ENCODE measurements at regions of chr17 and their contacts with region 1.

Region 1: DNA sequence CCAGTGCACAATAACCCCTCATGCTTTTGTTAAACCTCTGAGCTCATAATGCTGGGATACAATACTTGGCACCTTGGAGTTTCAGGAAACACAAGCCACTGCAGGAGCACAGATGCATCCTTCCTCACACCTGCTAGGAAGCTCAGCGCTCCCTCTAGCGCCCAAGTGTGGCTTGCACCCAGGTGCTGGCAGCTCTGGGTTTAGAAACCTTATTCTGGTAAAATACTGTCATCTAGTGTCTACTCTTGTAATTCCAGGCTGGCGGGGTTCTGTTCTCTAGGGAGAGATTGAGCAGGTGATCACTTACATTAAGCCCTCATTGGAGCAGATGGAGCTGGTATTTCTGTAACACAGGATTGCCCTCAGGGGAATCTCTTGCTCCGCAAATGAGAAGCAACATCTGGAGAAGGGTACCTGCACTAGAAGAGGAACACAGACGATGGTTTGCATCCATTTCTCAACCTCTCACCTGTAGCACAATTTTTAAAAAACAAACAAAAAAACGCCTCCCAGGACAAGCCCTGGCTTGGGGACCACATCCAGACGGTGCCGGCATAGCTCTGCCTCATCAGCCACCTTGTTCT is 1.5 kb downstream of the CCL1 start:
- DNase-seq: peak; percentile 25
- H3K4me3 Mint-ChIP-seq: no peak overlapping the region
- H3K27ac Mint-ChIP-seq: no peak overlapping the region
- H3K4me1 Mint-ChIP-seq: no peaks in the 10 kb centered on the region
- H3K27me3 Mint-ChIP-seq: peaks cover 19% of the 10 kb centered on the region
- CTCF ChIP-seq: peak; percentile 98

Region 2: GRCh38 chr17:34171245-34171818 is 190.2 kb before region 1 on chr17:
- CTCF ChIA-PET with region 1: interaction called, 22 read pairs
- POLR2A ChIA-PET with region 1: no interaction called
- intact Hi-C with region 1: no loop called
- DNase-seq: peak; percentile 29
- H3K4me3 Mint-ChIP-seq: no peak overlapping the region
- H3K27ac Mint-ChIP-seq: no peak overlapping the region
- H3K4me1 Mint-ChIP-seq: no peaks in the 10 kb centered on the region
- H3K27me3 Mint-ChIP-seq: no peaks in the 10 kb centered on the region
- CTCF ChIP-seq: peak; percentile 81

Region 3: DNA sequence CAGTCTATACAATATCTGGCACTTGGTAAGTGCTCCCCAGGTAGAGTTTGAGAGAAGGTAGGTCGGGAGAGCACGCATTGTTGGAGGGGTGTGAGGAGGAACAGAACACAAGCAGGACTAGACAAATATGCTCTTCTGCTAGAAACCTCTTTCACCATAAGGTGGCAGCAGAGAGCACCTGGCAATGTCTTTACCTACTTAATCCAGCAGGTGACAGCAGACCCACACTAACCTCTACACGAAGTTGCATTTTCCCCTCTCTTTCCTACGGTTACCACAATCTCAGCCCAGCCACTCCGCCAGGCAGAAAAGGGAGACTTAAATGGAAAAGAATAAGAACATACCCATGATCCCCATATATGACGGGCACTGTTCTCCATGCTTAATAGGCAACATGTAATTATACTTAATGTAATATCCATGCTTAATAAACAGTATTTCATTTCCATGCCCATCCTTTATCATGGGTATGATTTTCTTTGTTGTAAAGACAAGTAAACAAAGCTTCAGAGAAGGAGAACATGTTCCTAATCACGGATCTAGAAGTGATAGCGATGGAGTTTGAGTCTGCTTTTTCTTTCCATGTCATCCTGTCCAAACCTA is 161.5 kb before region 1 on chr17:
- CTCF ChIA-PET with region 1: interaction called, 184 read pairs
- POLR2A ChIA-PET with region 1: interaction called, 4 read pairs
- intact Hi-C with region 1: loop called (anchors 1 kb)
- DNase-seq: peak; percentile 79
- H3K4me3 Mint-ChIP-seq: no peak overlapping the region
- H3K27ac Mint-ChIP-seq: no peak overlapping the region
- H3K4me1 Mint-ChIP-seq: no peaks in the 10 kb centered on the region
- H3K27me3 Mint-ChIP-seq: peaks cover 15% of the 10 kb centered on the region
- CTCF ChIP-seq: peak; percentile 100

Region 4: GRCh38 chr17:34254651-34255380 is 106.8 kb before region 1 on chr17 and contains the start of gene CCL2:
- CTCF ChIA-PET with region 1: interaction called, 12 read pairs
- POLR2A ChIA-PET with region 1: no interaction called
- intact Hi-C with region 1: no loop called
- DNase-seq: peak; percentile 10
- H3K4me3 Mint-ChIP-seq: peak within 1 kb of the TSS; percentile 64
- H3K27ac Mint-ChIP-seq: peak within 1 kb of the TSS; percentile 60
- H3K4me1 Mint-ChIP-seq: peaks cover 46% of the 10 kb centered on the region
- H3K27me3 Mint-ChIP-seq: no peaks in the 10 kb centered on the region
- CTCF ChIP-seq: no peak
- total RNA-seq, gene CCL2: 0.59 and 1.0 TPM in 2 replicates

Region 5: GRCh38 chr17:34306466-34306865 is 55.1 kb before region 1 on chr17:
- CTCF ChIA-PET with region 1: interaction called, 5 read pairs
- POLR2A ChIA-PET with region 1: no interaction called
- intact Hi-C with region 1: loop called (anchors 1 kb)
- DNase-seq: peak; percentile 3
- H3K4me3 Mint-ChIP-seq: no peak overlapping the region
- H3K27ac Mint-ChIP-seq: no peak overlapping the region
- H3K4me1 Mint-ChIP-seq: peaks cover 5% of the 10 kb centered on the region
- H3K27me3 Mint-ChIP-seq: no peaks in the 10 kb centered on the region
- CTCF ChIP-seq: peak; percentile 32

Region 6: GRCh38 chr17:34339138-34339770 is 22.3 kb before region 1 on chr17:
- CTCF ChIA-PET with region 1: interaction called, 11 read pairs
- POLR2A ChIA-PET with region 1: no interaction called
- intact Hi-C with region 1: no loop called
- DNase-seq: no peak
- H3K4me3 Mint-ChIP-seq: no peak overlapping the region
- H3K27ac Mint-ChIP-seq: no peak overlapping the region
- H3K4me1 Mint-ChIP-seq: no peaks in the 10 kb centered on the region
- H3K27me3 Mint-ChIP-seq: peaks cover 19% of the 10 kb centered on the region
- CTCF ChIP-seq: no peak

Region 7: GRCh38 chr17:34347063-34347462 is 14.5 kb before region 1 on chr17:
- CTCF ChIA-PET with region 1: interaction called, 11 read pairs
- POLR2A ChIA-PET with region 1: no interaction called
- intact Hi-C with region 1: no loop called
- DNase-seq: no peak
- H3K4me3 Mint-ChIP-seq: no peak overlapping the region
- H3K27ac Mint-ChIP-seq: no peak overlapping the region
- H3K4me1 Mint-ChIP-seq: no peaks in the 10 kb centered on the region
- H3K27me3 Mint-ChIP-seq: no peaks in the 10 kb centered on the region
- CTCF ChIP-seq: no peak